MCF 10A (cell line): ENCODE measurements at regions of chr6 and their contacts with region 1.

Region 1: GRCh38 chr6:50128420-50129005 is 78.8 kb upstream of the DEFB112 start:
- DNase-seq: peak; percentile 23
- H3K4me3 Mint-ChIP-seq: no peak overlapping the region
- H3K27ac Mint-ChIP-seq: no peak overlapping the region
- H3K4me1 Mint-ChIP-seq: no peaks in the 10 kb centered on the region
- H3K27me3 Mint-ChIP-seq: peaks cover 73% of the 10 kb centered on the region
- CTCF ChIP-seq: peak; percentile 20

Region 2: GRCh38 chr6:50791900-50792508 is 663.5 kb after region 1 on chr6:
- CTCF ChIA-PET with region 1: interaction called, 6 read pairs
- POLR2A ChIA-PET with region 1: no interaction called
- intact Hi-C with region 1: loop called (anchors 2 kb)
- DNase-seq: peak; percentile 68
- H3K4me3 Mint-ChIP-seq: no peak overlapping the region
- H3K27ac Mint-ChIP-seq: no peak overlapping the region
- H3K4me1 Mint-ChIP-seq: no peaks in the 10 kb centered on the region
- H3K27me3 Mint-ChIP-seq: peaks cover 25% of the 10 kb centered on the region
- CTCF ChIP-seq: peak; percentile 72